Astrocyte of the cerebellum (primary cell): ENCODE measurements at regions of chr22 and their contacts with region 1.

Region 1: GRCh38 chr22:27416511-27417420 is 384.8 kb downstream of the MN1 start:
- DNase-seq: peak; percentile 84
- H3K4me3 ChIP-seq: no peak overlapping the region
- CTCF ChIP-seq: peak; percentile 28

Region 2: GRCh38 chr22:27467711-27468110 is 50.9 kb after region 1 on chr22:
- in situ Hi-C with region 1: loop called (anchors 5 kb)
- DNase-seq: no peak
- H3K4me3 ChIP-seq: no peak overlapping the region
- CTCF ChIP-seq: no peak